Endothelial cell of umbilical vein (primary cell): ENCODE measurements at regions of chr1 and their contacts with region 1.

Region 1: DNA sequence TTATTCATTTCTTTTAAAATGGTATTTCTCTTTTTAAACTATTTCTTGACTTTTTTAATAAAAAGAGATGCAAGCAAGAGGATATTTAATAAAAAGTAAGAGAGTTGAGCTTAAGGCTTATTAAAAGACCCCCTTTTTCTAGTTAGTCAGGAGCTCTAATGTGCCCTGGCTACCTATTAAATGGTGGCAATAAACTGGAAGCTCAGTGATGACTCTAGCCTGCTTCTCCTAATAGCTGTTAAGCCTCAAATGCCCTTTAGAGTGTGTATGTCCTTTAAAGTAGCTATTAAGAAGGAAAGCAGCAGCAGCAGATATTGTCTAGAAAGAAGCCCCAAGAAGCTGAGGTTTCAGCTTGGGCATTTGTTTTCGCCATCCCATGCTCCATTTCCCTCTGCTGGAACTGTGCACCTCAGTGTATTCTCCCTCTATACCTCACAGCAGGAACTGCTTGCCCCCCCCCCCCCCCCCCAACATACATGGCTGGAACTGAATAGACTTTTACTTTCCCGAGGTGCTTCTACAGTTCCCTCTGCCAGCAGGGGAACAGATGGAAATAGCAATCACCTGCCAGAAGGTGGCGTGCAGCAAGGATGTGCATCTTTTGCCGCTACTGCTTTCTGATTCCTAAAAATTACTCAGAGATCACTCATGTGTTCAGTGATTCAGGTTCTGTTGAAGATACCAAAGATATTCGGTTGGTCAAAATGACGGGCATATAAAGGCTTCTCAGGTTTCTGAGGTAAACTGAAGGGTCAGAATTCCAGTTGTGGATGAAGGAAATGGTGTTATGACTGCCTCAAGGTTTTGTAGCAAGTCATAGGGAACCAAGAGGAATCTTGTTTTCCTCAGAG is 2.5 kb downstream of the RGS4 start:
- DNase-seq: peak; percentile 88
- H3K4me3 ChIP-seq: peak overlapping the region in 2 of 3 experiments; percentile 30 to 98
- H3K27ac ChIP-seq: peak overlapping the region; percentile 69
- H3K4me1 ChIP-seq: peaks cover 44% of the 10 kb centered on the region
- H3K27me3 ChIP-seq: no peaks in the 10 kb centered on the region
- CTCF ChIP-seq: peak; percentile 68 to 79
- POLR2A ChIP-seq: no peak

Region 2: DNA sequence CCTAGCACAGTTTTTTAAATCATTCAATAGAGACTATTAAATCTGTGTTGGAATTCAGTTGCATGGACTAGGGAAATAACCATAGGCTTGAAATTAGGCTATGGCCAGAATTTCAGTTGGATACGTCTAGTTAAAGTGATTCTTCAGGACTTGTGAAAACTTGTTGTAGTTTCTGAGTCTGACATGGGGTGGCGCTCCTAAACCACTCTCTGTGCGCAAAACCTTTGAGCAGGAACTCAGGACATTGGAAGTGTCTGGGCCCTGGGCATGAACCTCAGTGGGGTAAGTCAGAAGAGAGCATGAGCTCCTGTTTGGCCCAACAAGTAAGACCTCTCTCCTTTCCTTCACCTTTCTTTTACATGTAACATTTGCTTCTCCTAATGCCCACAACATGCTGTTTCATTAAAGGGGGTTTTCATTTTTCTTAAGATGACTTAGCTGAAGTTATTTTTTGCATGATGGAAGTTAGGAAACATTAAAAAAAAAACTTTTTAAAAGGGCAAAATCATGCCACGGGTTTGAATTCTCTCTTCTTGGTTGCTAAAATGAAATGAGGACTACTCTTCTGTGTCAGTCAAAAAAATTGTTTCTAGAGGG is 193.5 kb before region 1 on chr1:
- CTCF ChIA-PET with region 1: interaction called, 152 read pairs
- POLR2A ChIA-PET with region 1: interaction called, 4 read pairs
- dilution Hi-C with region 1: loop called (anchors 25 kb)
- intact Hi-C with region 1: loop called (anchors 1 kb)
- DNase-seq: peak; percentile 85
- H3K4me3 ChIP-seq: no peak overlapping the region
- H3K27ac ChIP-seq: no peak overlapping the region
- H3K4me1 ChIP-seq: peaks cover 24% of the 10 kb centered on the region
- H3K27me3 ChIP-seq: no peaks in the 10 kb centered on the region
- CTCF ChIP-seq: peak; percentile 71 to 80
- POLR2A ChIP-seq: no peak

Region 3: DNA sequence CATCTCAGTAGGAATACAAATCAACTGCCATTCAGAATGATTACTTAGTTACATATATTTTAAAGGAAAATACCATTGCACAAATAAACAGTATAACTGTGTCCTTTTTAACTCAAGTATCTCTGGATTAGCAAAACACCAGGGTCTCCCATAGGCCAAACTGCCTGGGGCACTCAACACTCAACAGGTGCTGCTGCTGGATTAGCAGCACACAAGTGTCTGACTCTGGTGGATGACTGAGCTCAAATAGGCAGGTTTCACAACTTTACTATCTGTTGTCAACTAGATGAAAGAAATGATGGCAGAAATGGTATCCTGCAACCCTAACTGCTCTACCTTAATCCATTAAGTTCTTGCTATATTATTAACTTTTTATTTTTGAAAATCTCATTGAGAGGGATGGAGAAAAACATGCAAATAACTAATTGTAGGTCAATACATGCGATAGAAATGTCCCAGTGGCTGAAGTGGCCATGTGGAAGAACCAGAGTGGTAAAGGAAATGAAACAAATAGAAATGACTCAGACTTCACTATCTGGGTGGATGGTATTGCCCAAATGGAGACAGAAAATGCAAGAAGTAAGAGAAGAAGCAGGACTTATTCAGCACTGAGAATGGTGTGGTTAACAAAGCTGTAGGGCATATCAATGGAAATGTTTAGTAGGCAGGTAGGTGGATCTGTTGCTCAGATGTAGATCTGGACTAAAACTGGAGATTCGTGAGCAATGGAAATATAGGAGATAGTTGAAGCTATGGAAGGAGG is 119.9 kb before region 1 on chr1:
- CTCF ChIA-PET with region 1: interaction called, 13 read pairs
- POLR2A ChIA-PET with region 1: no interaction called
- dilution Hi-C with region 1: no loop called
- intact Hi-C with region 1: no loop called
- DNase-seq: peak; percentile 6
- H3K4me3 ChIP-seq: no peak overlapping the region
- H3K27ac ChIP-seq: no peak overlapping the region
- H3K4me1 ChIP-seq: peaks cover 10% of the 10 kb centered on the region
- H3K27me3 ChIP-seq: no peaks in the 10 kb centered on the region
- CTCF ChIP-seq: no peak
- POLR2A ChIP-seq: no peak

Region 4: GRCh38 chr1:163035446-163036249 is 36.0 kb before region 1 on chr1:
- CTCF ChIA-PET with region 1: interaction called, 5 read pairs
- POLR2A ChIA-PET with region 1: no interaction called
- dilution Hi-C with region 1: no loop called
- intact Hi-C with region 1: loop called (anchors 2 kb)
- DNase-seq: peak; percentile 72
- H3K4me3 ChIP-seq: no peak overlapping the region
- H3K27ac ChIP-seq: peak overlapping the region; percentile 54
- H3K4me1 ChIP-seq: peaks cover 21% of the 10 kb centered on the region
- H3K27me3 ChIP-seq: no peaks in the 10 kb centered on the region
- CTCF ChIP-seq: no peak
- POLR2A ChIP-seq: no peak

Region 5: GRCh38 chr1:163147019-163147418 is 75.4 kb after region 1 on chr1:
- CTCF ChIA-PET with region 1: interaction called, 4 read pairs
- POLR2A ChIA-PET with region 1: no interaction called
- dilution Hi-C with region 1: no loop called
- intact Hi-C with region 1: loop called (anchors 2 kb)
- DNase-seq: peak; percentile 90
- H3K4me3 ChIP-seq: no peak overlapping the region
- H3K27ac ChIP-seq: peak overlapping the region; percentile 72
- H3K4me1 ChIP-seq: peaks cover 13% of the 10 kb centered on the region
- H3K27me3 ChIP-seq: no peaks in the 10 kb centered on the region
- CTCF ChIP-seq: no peak
- POLR2A ChIP-seq: no peak

Region 6: DNA sequence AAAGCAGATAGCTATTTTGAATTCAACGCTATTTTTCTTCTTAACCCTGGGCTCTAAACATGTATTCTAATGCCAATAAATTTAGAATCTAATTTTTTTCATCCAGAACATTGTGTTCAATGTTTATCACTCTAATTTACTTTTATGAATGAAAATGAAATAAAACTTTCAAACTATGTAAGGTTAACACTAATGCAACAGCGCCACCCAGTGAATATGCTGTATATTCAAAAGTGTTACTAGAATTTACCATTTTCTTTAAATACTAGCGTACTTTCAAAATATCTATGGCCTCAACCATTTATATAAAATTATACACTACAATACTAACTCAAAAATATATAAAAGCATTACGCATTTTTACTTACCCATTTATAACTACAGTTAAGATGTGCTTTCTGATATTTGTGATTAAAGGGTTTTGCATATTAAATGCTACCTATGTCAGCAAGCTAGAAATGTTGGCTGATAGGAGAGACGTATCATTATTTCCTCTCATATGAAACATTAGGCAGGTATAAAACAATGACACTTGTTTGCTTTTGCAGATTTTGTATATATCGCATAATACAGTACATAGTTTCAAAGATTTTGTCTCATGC is 244.2 kb after region 1 on chr1:
- CTCF ChIA-PET with region 1: interaction called, 103 read pairs
- POLR2A ChIA-PET with region 1: no interaction called
- dilution Hi-C with region 1: no loop called
- intact Hi-C with region 1: loop called (anchors 1 kb)
- DNase-seq: peak; percentile 63
- H3K4me3 ChIP-seq: no peak overlapping the region
- H3K27ac ChIP-seq: no peak overlapping the region
- H3K4me1 ChIP-seq: peaks cover 6% of the 10 kb centered on the region
- H3K27me3 ChIP-seq: no peaks in the 10 kb centered on the region
- CTCF ChIP-seq: peak; percentile 15 to 28
- POLR2A ChIP-seq: no peak